ENCODE measurements at regions of chr11 and their contacts with region 1.

Region 1: GRCh38 chr11:16713594-16713993 is 24.9 kb upstream of the C11orf58 start:
- DNase-seq: no peak
- ATAC-seq: no peak
- H3K4me3 Mint-ChIP-seq: no peak overlapping the region
- H3K27ac Mint-ChIP-seq: no peak overlapping the region
- H3K4me1 Mint-ChIP-seq: no peaks in the 10 kb centered on the region
- H3K27me3 Mint-ChIP-seq: peaks cover 6 to 14% (median 11%) of the 10 kb centered on the region in 5 donors

Region 2: DNA sequence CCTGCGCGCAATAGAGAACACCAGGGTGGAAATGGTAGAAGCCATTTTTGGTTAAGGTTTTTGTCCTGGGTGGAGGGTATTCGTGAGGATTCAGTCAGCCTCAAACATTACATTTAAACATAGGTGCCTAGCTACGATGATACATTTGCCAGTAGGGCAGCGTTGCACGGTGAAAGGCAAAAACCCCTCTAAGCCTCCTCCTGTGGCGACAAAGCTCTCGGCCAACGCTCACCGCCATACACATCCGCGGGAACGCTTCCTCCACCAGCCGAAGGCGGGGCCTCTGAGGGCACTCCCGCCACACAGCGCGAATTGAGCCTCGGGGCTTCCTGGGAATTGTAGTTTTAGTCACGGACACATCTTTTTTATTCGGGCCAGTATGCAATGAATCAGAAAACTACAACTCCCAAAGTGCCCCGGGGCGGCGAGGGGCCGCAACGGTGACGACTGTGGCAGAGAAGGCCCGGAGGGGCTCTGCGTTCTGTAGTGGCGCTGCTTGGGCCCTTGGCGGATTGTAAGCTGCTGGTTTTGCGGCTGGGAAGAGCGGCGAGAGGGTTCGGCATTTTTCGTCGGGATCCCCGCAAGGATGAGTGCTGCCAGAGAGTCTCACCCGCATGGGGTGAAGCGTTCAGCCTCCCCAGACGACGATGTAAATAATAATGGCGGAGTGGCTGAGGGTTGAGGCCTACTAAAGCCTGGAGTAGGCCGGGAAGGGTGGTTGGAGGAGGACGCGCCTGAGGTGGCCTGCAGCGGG is 24.8 kb after region 1 on chr11 and contains the start of gene C11orf58:
- POLR2A ChIA-PET with region 1: no interaction called
- DNase-seq: peak; percentile 87 to 98 (median 96)
- ATAC-seq: peak; percentile 93 to 94
- H3K4me3 Mint-ChIP-seq: peak within 1 kb of the TSS in 4 of 10 donors; percentile 48 to 83 (median 65)
- H3K27ac Mint-ChIP-seq: peak within 1 kb of the TSS in 2 of 10 donors; percentile 66 to 67
- H3K4me1 Mint-ChIP-seq: peaks cover 11 to 25% (median 22%) of the 10 kb centered on the region in 4 donors
- H3K27me3 Mint-ChIP-seq: no peaks in the 10 kb centered on the region
- polyA plus RNA-seq, gene C11orf58: 169 to 181 (median 171) TPM

Region 3: GRCh38 chr11:16778286-16778685 is 64.7 kb after region 1 on chr11:
- POLR2A ChIA-PET with region 1: interaction called, 10 read pairs
- DNase-seq: no peak
- ATAC-seq: no peak
- H3K4me3 Mint-ChIP-seq: no peak overlapping the region
- H3K27ac Mint-ChIP-seq: no peak overlapping the region
- H3K4me1 Mint-ChIP-seq: peaks cover 0 to 2% (median 0%) of the 10 kb centered on the region in 4 donors
- H3K27me3 Mint-ChIP-seq: peaks cover 0 to 3% (median 0%) of the 10 kb centered on the region in 5 donors

Measured in naive thymus-derived CD8-positive, alpha-beta T cell (primary cell).